Mammary epithelial cell (primary cell): ENCODE measurements at regions of chr10 and their contacts with region 1.

Region 1: GRCh38 chr10:71888623-71889387 is 37.8 kb upstream of the PSAP start:
- DNase-seq: peak; percentile 78
- H3K4me3 ChIP-seq: peak overlapping the region; percentile 56 to 59 (median 56)
- H3K27ac ChIP-seq: peak overlapping the region; percentile 84
- H3K4me1 ChIP-seq: peaks cover 12% of the 10 kb centered on the region
- H3K27me3 ChIP-seq: no peaks in the 10 kb centered on the region
- CTCF ChIP-seq: no peak

Region 2: GRCh38 chr10:71822448-71822763 is 66.4 kb before region 1 on chr10:
- CTCF ChIA-PET with region 1: no interaction called
- dilution Hi-C with region 1: no loop called
- in situ Hi-C with region 1: no loop called
- intact Hi-C with region 1: no loop called
- DNase-seq: no peak
- H3K4me3 ChIP-seq: no peak overlapping the region
- H3K27ac ChIP-seq: no peak overlapping the region
- H3K4me1 ChIP-seq: no peaks in the 10 kb centered on the region
- H3K27me3 ChIP-seq: no peaks in the 10 kb centered on the region
- CTCF ChIP-seq: no peak

Region 3: DNA sequence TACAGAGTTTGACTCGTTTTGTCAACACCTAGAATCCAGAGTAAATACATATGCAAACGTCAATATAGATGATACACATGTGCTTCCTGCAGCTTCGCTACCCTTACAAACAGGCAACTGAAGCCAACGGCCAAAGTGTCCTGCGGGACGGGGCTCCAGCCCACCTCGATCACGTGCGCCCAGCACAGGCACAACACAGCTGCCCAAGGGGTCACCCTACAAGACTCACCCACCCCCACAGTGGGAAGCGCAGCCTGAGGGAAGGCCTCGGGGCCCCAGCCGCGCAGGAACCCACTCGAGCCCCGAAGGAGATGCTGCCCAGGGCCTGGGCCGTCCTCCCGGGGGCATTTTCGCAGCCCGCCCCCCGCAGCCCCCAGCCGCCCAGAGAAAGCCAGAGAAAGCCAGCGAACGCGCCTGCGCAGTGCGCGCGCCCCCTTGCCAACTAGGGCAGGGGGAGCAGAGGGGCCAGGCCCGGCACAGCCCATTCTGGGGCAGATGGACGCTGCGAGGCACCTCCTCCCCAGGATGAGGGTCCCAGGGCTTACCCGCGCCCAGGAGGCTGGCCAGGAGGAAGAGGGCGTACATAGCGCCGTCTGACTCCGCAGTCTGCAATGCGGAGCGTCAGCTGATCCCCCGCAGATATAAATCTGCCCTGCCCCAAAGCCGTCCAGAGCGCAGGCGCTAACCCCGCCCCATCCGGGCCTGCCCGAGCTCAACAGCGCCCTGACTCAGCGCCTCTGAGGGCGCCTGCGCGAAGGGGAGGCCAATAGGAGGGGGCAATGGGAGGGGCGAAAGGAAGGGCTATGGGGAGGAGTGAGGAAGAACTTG is 38.0 kb before region 1 on chr10 and contains the start of gene PSAP:
- CTCF ChIA-PET with region 1: no interaction called
- dilution Hi-C with region 1: no loop called
- in situ Hi-C with region 1: loop called in 1 of 2 experiments (anchors 5 kb)
- intact Hi-C with region 1: loop called (anchors 1 kb)
- DNase-seq: peak; percentile 98
- H3K4me3 ChIP-seq: peak within 1 kb of the TSS; percentile 84 to 100 (median 90)
- H3K27ac ChIP-seq: peak within 1 kb of the TSS; percentile 87
- H3K4me1 ChIP-seq: peaks cover 13% of the 10 kb centered on the region
- H3K27me3 ChIP-seq: no peaks in the 10 kb centered on the region
- CTCF ChIP-seq: no peak
- total RNA-seq, gene PSAP: 655 to 1,757 TPM

Region 4: GRCh38 chr10:71860243-71861029 is 28.4 kb before region 1 on chr10:
- CTCF ChIA-PET with region 1: no interaction called
- dilution Hi-C with region 1: no loop called
- in situ Hi-C with region 1: no loop called
- intact Hi-C with region 1: loop called (anchors 2 kb)
- DNase-seq: peak; percentile 99
- H3K4me3 ChIP-seq: no peak overlapping the region
- H3K27ac ChIP-seq: peak overlapping the region; percentile 91
- H3K4me1 ChIP-seq: peaks cover 30% of the 10 kb centered on the region
- H3K27me3 ChIP-seq: no peaks in the 10 kb centered on the region
- CTCF ChIP-seq: no peak